ENCODE measurements at regions of chr17 and their contacts with region 1.

Region 1: DNA sequence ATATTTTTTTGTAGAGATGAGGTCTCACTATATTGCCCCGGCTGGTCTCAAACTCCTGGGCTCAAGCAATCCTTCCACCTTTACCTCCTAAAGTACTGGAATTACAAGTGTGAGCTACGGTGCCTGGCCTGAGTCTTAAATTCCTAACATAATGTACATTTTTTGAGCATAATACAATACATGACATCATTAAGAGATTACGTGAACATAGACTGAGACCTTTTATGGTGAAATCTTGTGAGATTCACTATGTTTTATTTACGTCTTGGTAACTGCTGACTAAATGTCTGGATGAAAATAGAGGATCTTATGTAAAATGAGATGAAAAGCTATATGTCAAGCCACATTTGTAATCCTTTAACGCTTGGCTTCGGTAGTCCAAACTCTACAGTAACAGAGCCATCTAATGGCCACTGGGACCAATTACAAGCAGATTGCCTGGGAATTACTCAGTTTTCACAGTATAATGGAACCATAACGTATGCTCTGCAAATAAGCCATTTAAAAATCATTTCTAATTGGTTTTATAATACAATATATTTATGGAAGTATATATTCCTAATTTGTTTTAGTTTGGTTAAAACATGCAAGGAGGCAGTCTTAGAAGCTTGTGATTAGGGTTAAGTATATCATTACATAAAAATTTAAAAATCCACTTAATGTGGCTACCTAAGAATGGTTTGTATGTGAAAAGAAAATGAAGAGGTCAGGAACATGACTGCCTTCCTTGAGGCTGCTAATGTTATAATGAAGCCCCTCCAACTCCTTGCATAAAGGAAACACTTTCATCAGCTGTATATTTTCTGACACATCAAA is 8.1 kb upstream of the EFCAB13 start:
- DNase-seq: peak; percentile 67
- CTCF ChIP-seq: peak; percentile 89

Region 2: DNA sequence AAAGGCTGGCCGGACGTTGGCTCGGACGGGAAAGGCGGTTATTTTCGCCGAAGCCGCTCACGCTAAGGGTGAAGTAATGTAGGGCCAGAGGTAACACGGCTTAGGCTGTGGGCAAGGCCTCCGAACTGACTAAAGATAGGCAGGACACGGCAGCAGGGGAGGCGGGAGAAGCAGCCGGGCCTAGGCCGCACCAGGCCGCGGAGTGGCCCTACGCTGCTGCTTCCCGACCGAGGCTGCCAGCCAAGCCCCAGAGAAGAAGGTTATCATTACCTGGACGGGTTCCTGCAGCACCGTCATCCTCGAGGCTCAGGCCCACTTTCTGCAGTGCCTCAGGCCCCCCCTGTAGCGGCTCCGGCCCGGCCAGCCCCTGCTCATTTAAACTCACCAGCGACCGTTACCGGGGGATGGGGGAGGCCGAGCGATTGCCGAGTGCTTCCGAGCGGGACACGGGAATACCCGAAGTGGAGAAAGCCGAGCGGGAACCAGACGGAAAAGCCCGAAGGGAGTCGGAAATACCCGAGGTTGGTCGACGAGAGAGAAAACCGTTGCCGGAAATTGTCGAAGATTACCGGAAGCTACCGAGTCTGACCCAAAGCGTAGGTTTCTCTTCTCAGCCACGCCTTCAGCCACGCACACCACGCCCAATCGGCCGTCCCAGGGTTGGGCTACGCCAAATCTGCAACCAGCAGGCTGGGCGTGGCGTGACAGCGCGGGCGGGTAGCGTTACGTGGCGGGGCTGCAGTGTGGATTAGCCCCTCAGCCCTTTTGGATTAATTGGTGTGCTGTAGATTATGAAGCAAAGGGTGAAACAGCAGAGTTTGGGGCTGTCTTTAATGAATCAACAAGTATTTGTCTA is 126.6 kb before region 1 on chr17 and contains the start of gene CDC27:
- CTCF ChIA-PET with region 1: interaction called, 16 read pairs
- POLR2A ChIA-PET with region 1: no interaction called
- DNase-seq: peak; percentile 98
- CTCF ChIP-seq: no peak

Region 3: DNA sequence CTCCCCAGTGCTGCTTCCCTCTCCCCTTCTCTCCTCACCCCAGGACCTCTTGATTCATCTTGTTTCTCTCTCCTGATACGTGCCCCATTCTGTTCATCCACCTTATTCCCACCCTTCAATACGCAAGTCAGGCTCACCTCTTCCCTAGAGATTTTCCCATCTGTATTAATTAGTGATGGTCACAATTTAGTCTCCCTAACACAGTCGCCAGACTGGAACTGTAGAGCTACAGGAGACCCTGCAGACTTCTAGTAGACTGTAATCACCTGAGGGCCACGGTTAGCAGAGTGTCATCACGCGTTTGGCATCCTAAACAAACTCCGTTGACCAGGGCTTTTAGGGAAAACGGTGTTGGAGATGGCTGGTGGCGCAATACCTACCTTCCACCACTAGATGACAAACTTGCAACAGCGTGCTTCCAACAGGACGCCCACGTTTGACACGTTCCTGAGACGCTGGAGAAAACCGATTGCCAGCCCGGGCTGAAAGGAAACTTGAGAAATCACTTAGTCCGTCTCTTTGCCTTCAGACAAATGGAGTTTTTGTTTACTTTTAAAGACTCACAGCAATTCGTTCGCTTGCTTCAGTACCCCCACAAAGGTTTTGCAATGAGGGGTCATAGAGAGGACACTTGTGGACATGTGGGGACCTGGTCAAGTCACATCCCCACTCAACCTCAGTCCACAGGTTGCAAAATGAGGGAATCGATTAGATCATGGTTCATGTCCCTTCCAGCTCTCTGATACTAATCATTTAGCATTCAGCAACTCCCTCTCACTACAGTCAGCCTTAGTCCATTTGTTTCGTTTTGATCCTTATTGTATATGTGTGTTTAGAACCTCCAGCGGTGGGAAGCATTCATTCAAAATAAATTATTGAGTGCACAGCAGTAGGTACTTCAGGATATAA is 85.9 kb before region 1 on chr17:
- CTCF ChIA-PET with region 1: interaction called, 107 read pairs
- POLR2A ChIA-PET with region 1: no interaction called
- DNase-seq: peak; percentile 83
- CTCF ChIP-seq: peak; percentile 95

Region 4: GRCh38 chr17:47279062-47279736 is 36.5 kb before region 1 on chr17:
- CTCF ChIA-PET with region 1: interaction called, 10 read pairs
- POLR2A ChIA-PET with region 1: no interaction called
- DNase-seq: peak; percentile 82
- CTCF ChIP-seq: no peak

Region 5: GRCh38 chr17:47305302-47305923 is 10.2 kb before region 1 on chr17:
- CTCF ChIA-PET with region 1: interaction called, 18 read pairs
- POLR2A ChIA-PET with region 1: no interaction called
- DNase-seq: no peak
- CTCF ChIP-seq: no peak